GM12878 (cell line): ENCODE measurements at regions of chr3 and their contacts with region 1.

Region 1: DNA sequence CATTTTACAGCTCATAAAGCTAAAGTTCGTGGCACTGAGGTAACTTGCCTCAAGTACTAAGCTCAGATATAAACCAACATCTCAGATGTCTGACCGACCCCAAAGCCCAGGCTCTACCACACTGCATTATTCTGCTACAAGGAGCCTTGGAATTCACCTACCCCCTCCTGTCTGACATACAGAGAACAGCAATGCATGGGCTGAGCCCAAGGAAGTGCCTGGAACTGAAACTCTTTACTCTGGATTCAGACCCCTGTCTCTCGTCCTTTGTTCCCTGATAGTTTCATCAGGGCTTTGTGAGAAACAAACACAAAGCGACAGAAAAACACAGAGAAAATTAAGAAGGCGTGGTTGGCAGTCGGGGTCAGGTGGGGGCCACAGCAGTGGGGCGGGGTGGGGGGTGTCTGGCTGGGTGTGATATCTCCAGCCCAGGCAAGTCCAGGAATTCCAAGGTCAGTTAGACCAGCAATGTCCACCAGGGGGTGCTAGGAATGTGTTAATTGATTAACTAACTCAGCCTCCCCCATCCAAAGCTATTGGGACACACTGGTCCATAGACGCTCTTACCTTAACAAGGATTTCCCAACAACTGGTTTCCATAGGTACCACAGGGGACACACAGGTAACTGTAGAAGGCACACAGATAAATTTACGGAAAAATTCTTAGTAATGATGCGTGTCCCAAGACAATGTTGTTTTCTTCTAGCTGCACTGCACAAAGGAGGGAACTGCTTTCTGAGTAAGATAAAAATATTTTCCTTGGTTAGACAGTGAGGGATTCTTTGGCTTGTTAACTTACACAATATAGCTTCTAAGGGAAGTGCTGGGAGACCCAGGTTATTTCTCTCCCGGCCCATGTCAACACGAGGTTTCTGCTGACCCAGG is 18.8 kb upstream of the SSUH2 start:
- DNase-seq: peak; percentile 36
- ATAC-seq: peak; percentile 56
- H3K4me3 ChIP-seq: no peak overlapping the region
- H3K27ac ChIP-seq: no peak overlapping the region
- H3K4me1 ChIP-seq: peaks cover 24% of the 10 kb centered on the region
- H3K27me3 ChIP-seq: no peaks in the 10 kb centered on the region
- CTCF ChIP-seq: peak; percentile 54 to 68 (median 58)
- EP300 ChIP-seq: no peak
- POLR2A ChIP-seq: no peak
- RAD21 ChIP-seq: peak; percentile 64

Region 2: GRCh38 chr3:7953449-7954015 is 709.9 kb before region 1 on chr3:
- CTCF ChIA-PET with region 1: no interaction called
- POLR2A ChIA-PET with region 1: no interaction called
- RAD21 ChIA-PET with region 1: no interaction called
- SMC1A ChIA-PET with region 1: no interaction called
- in situ Hi-C with region 1: no loop called
- intact Hi-C with region 1: no loop called
- DNase-seq: no peak
- ATAC-seq: no peak
- H3K4me3 ChIP-seq: no peak overlapping the region
- H3K27ac ChIP-seq: no peak overlapping the region
- H3K4me1 ChIP-seq: no peaks in the 10 kb centered on the region
- H3K27me3 ChIP-seq: no peaks in the 10 kb centered on the region
- CTCF ChIP-seq: no peak
- EP300 ChIP-seq: no peak
- POLR2A ChIP-seq: no peak
- RAD21 ChIP-seq: no peak

Region 3: DNA sequence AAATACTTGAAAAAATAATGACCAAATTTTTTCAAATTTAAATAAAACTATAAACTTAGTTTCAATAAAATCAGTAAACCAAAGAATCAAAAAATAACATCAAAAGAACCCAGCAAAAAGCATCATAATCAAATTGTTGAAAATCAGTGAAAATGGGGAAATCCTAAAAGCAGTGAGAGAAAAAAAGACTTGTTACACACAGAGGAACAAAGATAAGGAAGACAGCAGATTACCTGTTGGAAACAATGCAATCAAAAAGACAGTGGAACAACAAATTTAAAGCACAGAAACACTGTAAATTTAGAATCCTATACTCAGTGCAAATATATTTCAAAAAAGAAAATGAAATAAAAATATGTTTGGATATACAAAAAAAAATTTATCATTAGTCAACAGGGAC is 318.0 kb before region 1 on chr3:
- CTCF ChIA-PET with region 1: no interaction called
- POLR2A ChIA-PET with region 1: no interaction called
- RAD21 ChIA-PET with region 1: no interaction called
- SMC1A ChIA-PET with region 1: no interaction called
- in situ Hi-C with region 1: no loop called
- intact Hi-C with region 1: no loop called
- DNase-seq: no peak
- ATAC-seq: no peak
- H3K4me3 ChIP-seq: no peak overlapping the region
- H3K27ac ChIP-seq: no peak overlapping the region
- H3K4me1 ChIP-seq: no peaks in the 10 kb centered on the region
- H3K27me3 ChIP-seq: no peaks in the 10 kb centered on the region
- CTCF ChIP-seq: no peak
- EP300 ChIP-seq: no peak
- POLR2A ChIP-seq: no peak
- RAD21 ChIP-seq: no peak

Region 4: DNA sequence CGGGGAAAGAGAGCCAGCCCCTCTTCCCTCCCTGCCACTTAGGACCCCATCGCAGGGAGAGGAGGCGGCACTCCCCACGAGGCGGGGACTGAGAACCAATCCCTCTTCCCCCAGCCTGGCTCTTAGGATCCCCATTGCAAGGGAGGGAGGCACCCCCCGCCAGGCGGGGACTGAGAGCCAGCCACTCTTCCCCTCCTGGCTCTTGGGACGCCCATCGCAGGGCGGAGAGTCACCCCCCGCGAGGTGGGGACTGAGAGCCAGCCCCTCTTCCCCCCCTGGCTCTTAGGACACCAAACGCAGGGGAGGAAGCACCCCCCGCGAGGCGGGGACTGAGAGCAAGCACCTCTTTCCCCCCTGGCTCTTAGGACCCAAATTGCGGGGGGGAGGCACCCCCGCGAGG is 15.3 kb after region 1 on chr3:
- CTCF ChIA-PET with region 1: interaction called, 31 read pairs
- POLR2A ChIA-PET with region 1: no interaction called
- RAD21 ChIA-PET with region 1: interaction called, 14 read pairs
- SMC1A ChIA-PET with region 1: interaction called, 13 read pairs
- in situ Hi-C with region 1: no loop called
- intact Hi-C with region 1: loop called (anchors 2 kb)
- DNase-seq: no peak
- ATAC-seq: no peak
- H3K4me3 ChIP-seq: no peak overlapping the region
- H3K27ac ChIP-seq: no peak overlapping the region
- H3K4me1 ChIP-seq: no peaks in the 10 kb centered on the region
- H3K27me3 ChIP-seq: no peaks in the 10 kb centered on the region
- CTCF ChIP-seq: no peak
- EP300 ChIP-seq: no peak
- POLR2A ChIP-seq: no peak
- RAD21 ChIP-seq: no peak

Region 5: DNA sequence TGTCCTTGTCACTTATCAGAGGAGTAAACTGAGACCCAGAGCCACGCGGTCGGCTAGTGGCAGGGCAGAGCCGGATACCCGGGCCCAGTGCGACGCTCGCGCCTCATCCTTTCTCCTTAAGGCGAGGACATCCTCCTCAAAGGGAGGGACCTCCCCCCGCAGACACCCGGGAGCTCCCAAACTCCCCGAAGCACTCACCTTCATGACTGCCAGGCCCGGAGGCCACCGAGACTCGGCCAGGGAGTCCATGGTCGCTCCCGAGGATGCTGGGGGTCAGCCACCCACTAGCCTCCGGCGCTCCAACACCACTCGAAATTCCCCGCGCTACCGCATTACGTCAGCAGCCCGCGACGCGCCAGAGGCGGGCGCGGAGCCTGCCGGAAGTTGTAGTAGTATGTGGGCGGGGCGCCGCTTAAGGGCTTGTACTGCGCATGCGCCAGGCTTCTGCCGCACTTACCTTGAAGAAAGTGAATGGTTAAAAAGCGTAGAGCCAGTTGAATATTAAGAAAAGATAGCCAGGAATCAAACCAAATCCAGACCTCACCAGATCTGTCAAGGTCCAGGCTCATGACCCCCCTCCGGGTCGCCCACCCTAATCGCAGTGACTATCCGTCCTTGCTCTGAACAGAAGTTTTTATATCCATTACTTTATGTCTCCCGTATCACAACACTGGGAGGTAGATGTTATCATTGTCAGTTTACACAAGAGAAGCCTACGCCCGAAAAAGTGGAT is 299.9 kb after region 1 on chr3 and contains the start of gene RAD18:
- CTCF ChIA-PET with region 1: no interaction called
- POLR2A ChIA-PET with region 1: no interaction called
- RAD21 ChIA-PET with region 1: no interaction called
- SMC1A ChIA-PET with region 1: no interaction called
- in situ Hi-C with region 1: no loop called
- intact Hi-C with region 1: loop called (anchors 5 kb)
- DNase-seq: peak; percentile 71
- ATAC-seq: peak; percentile 87
- H3K4me3 ChIP-seq: peak within 1 kb of the TSS; percentile 83
- H3K27ac ChIP-seq: peak within 1 kb of the TSS; percentile 79
- H3K4me1 ChIP-seq: no peaks in the 10 kb centered on the region
- H3K27me3 ChIP-seq: no peaks in the 10 kb centered on the region
- CTCF ChIP-seq: no peak
- EP300 ChIP-seq: no peak
- POLR2A ChIP-seq: peak; percentile 79
- RAD21 ChIP-seq: no peak
- polyA plus RNA-seq, gene RAD18: 8.7 to 11.4 TPM